SK-N-SH (cell line): ENCODE measurements at regions of chr11 and their contacts with region 1.

Region 1: DNA sequence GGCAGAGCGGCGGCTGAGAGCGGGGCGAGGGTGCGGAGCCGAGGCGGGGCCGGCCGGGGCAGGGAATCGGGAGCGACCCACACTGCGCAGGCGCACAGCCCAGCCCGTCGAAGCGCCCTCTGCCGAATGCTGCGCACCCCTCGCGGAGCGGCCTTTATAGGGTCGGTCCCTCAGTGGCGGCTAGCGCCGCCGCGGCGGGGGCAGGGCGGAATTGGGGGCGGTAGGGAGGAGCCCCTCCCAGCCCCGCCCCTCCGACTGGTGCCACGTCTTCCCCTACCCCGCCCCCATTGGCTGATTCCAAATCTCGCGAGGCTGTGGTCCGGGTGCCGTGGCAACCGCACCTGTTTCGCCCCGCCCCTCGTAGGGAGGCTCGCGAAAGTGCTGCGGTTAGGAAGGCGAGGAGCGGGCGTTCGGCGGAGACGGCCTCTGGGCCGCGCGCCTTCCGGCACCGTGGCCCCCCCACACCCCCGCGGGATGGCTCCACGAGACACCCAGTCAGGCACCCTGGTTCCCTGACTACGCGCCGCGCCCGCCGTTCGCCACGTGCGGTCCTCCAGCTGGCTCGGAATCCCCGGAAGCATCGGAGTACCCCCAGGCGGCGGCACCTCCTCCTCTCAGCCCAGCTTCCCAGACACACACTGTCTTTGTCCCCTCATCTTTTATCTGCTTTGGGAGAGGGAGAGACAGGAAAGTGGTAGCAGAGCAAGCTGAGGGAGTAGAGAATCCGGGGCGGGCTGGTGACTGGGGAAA is at the start of gene EHD1:
- DNase-seq: peak; percentile 100
- H3K4me3 ChIP-seq: peak within 1 kb of the TSS; percentile 95 to 96
- H3K27ac ChIP-seq: peak within 1 kb of the TSS; percentile 76 to 77
- H3K4me1 ChIP-seq: peaks cover 6 to 32% of the 10 kb centered on the region in 2 experiments; a peak in 2 of 4 replicates
- H3K27me3 ChIP-seq: no peaks in the 10 kb centered on the region
- CTCF ChIP-seq: peak; percentile 49
- EP300 ChIP-seq: no peak
- RAD21 ChIP-seq: peak; percentile 42; the same call in 1 of the 2 replicates
- polyA plus RNA-seq, gene EHD1: 57.6 and 93.3 TPM in 2 replicates

Region 2: DNA sequence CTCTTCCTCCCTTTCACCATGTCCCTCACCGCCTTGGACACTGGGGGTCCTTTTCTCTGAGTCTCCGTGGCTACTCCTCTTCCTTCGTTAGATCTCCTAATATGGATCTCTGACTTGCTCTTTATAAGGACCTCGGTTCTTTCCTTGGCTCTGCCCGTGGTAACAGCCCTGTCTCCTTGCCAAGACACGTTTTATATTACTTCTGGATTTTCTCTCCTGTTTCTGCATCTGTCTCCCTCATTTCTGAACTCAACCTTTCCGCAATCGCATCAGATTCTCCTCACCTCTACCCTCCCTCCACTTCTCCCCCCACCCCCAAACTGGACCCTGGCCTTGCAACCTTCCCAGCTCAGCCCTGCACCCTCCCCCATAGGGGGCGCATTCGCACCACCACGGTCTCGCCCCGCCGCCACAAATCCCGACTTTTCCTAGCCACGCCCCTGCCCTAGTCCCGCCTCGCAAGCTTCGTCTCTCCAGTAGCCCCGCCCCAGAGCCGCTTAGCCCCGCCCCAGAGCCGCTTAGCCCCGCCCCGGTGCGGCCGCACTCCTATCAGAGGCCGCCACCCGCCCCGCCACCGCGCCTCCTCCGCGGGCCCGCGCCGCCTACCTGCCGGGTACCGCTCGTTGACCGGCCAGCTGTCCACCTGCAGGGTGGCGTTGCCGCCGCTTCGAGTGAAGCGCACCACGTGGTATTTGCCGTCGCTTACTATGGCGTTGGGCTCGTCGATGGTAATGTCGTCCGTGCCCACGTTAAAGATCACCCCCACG is 248.7 kb before region 1 on chr11:
- CTCF ChIA-PET with region 1: no interaction called
- POLR2A ChIA-PET with region 1: no interaction called
- DNase-seq: peak; percentile 85
- H3K4me3 ChIP-seq: no peak overlapping the region
- H3K27ac ChIP-seq: peak overlapping the region in 1 of 2 experiments; percentile 71; a peak in 1 of 4 replicates
- H3K4me1 ChIP-seq: peaks cover 0 to 6% of the 10 kb centered on the region in 2 experiments; a peak in 1 of 4 replicates
- H3K27me3 ChIP-seq: peaks cover 12% of the 10 kb centered on the region; the same call in 1 of the 2 replicates
- CTCF ChIP-seq: no peak
- EP300 ChIP-seq: no peak
- RAD21 ChIP-seq: no peak

Region 3: DNA sequence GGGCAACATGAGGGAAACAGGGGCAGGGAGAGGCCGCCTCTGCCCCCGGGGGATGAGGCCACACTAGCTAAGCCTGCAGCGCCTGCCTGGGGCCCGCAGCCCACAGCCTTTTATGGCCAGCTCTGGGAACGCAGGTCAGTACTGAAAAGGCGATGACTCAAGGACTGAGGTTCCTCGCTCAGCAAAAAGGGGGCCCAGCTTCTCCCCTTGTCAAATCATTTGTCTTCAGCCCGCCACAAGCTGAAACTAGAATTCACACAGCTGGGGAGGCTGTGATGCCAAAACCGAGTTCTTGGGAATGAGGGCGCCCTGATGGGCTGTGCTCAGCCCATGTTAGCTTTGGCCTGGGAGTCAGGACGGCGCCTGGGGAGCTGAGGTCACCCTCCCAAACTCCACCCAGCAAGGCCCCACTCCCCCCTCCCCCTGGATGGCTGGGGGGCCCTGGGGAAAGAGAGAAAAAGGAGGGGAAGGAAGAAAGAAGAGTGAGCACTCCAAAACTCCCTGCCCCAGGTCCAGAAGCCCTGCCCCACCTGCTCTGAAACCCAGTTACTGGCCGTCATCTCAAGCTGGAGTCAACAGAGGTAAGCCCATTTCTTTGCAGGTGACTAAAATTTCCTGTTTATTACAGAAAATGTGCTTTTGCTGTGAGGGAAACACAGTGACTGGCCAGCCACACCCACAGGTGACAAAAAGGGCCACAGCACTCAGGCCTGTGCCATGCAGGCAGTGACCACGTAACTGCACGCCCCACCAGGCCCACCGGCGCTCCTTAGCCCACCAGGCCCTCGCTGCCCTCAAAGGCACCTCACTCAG is 14.0 kb before region 1 on chr11:
- CTCF ChIA-PET with region 1: interaction called, 15 read pairs
- POLR2A ChIA-PET with region 1: interaction called, 4 read pairs
- DNase-seq: no peak
- H3K4me3 ChIP-seq: no peak overlapping the region
- H3K27ac ChIP-seq: peak overlapping the region in 1 of 2 experiments; percentile 12; a peak in 1 of 4 replicates
- H3K4me1 ChIP-seq: peaks cover 6 to 11% of the 10 kb centered on the region in 2 experiments; a peak in 3 of 4 replicates
- H3K27me3 ChIP-seq: no peaks in the 10 kb centered on the region
- CTCF ChIP-seq: no peak
- EP300 ChIP-seq: no peak
- RAD21 ChIP-seq: no peak